Body of pancreas (tissue), 4 donors: ENCODE measurements at regions of chr3 and their contacts with region 1.

Region 1: GRCh38 chr3:167691366-167691765 is 37.6 kb upstream of the WDR49 start:
- DNase-seq: no peak
- ATAC-seq: no peak
- H3K4me3 ChIP-seq: no peak overlapping the region
- H3K27ac ChIP-seq: no peak overlapping the region
- H3K4me1 ChIP-seq: peaks cover 3% of the 10 kb centered on the region
- H3K27me3 ChIP-seq: no peaks in the 10 kb centered on the region
- CTCF ChIP-seq: no peak
- POLR2A ChIP-seq: no peak

Region 2: GRCh38 chr3:167406875-167407492 is 284.4 kb before region 1 on chr3:
- intact Hi-C with region 1: loop called (anchors 10 kb)
- DNase-seq: peak; percentile 70 to 85 (median 80)
- ATAC-seq: peak; percentile 96
- H3K4me3 ChIP-seq: no peak overlapping the region
- H3K27ac ChIP-seq: peak overlapping the region in 1 of 4 donors; percentile 32
- H3K4me1 ChIP-seq: no peaks in the 10 kb centered on the region
- H3K27me3 ChIP-seq: no peaks in the 10 kb centered on the region
- CTCF ChIP-seq: peak; percentile 21 to 89 (median 80)
- POLR2A ChIP-seq: no peak

Region 3: DNA sequence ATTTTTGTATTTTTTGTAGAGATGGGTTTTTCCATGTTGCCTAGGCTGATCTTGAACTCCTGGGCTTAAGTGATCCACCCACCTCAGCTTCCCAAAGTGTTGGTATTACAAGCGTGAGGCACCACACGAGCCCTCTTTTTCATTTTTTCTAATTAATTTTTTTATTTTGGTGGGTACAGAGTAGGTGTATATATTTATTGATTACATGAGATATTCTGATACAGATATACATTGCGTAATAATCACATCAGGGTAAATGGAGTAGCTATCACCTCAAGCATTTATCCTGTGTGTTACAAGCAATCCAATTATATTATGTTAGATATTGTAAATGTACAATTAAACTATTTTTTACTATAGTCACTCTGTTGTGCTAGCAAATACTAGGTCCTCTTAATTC is 103.7 kb before region 1 on chr3:
- intact Hi-C with region 1: no loop called
- DNase-seq: no peak
- ATAC-seq: no peak
- H3K4me3 ChIP-seq: no peak overlapping the region
- H3K27ac ChIP-seq: no peak overlapping the region
- H3K4me1 ChIP-seq: no peaks in the 10 kb centered on the region
- H3K27me3 ChIP-seq: no peaks in the 10 kb centered on the region
- CTCF ChIP-seq: no peak
- POLR2A ChIP-seq: no peak

Region 4: DNA sequence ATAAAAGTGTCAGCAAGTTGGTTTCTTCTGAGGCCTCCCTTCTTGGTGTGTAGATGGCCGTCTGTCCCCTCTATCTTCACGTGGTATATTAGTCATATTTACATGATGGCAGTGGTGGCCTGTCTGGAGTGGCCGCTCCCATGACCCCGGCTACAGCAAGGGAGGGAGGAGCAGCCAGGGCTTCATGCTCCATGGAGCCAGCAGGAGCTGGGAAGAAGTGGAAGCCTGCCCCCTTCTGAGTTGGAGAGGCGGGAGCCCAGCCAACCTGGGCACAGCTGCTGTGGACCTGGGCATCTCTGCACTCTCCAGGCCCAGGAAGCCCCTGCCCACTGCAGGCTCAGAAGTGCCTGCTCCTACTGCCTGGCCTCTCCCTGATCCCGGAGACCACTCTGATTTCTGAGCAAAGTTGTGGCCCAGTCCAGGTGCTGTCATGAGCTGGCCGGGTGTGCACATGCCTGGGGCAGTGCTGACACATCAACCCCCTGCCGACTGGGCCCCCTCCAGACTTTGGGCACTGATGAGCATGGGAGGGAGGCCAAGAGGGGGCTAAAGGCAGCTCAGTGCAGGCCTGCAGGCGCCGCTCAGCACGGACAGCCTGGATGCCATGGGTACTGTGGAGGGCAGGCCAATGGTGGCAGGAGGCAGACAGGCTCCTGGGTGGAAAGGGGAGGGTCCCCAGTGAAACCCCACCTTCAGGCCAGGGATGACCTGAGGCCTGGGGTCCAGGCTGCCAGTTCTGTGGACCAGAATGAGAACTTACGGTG is 128.9 kb after region 1 on chr3:
- intact Hi-C with region 1: no loop called
- DNase-seq: no peak
- ATAC-seq: no peak
- H3K4me3 ChIP-seq: no peak overlapping the region
- H3K27ac ChIP-seq: no peak overlapping the region
- H3K4me1 ChIP-seq: peaks cover 2% of the 10 kb centered on the region
- H3K27me3 ChIP-seq: no peaks in the 10 kb centered on the region
- CTCF ChIP-seq: no peak
- POLR2A ChIP-seq: no peak

Region 5: GRCh38 chr3:167978031-167978430 is 286.7 kb after region 1 on chr3:
- intact Hi-C with region 1: no loop called
- DNase-seq: no peak
- ATAC-seq: no peak
- H3K4me3 ChIP-seq: no peak overlapping the region
- H3K27ac ChIP-seq: no peak overlapping the region
- H3K4me1 ChIP-seq: no peaks in the 10 kb centered on the region
- H3K27me3 ChIP-seq: no peaks in the 10 kb centered on the region
- CTCF ChIP-seq: no peak
- POLR2A ChIP-seq: no peak